Transverse colon (tissue), 4 donors: ENCODE measurements at regions of chr4 and their contacts with region 1.

Region 1: GRCh38 chr4:142846729-142847596 is 862 bp upstream of the INPP4B start:
- DNase-seq: peak; percentile 71
- H3K4me3 ChIP-seq: peak overlapping the region; percentile 7 to 61 (median 56)
- H3K27ac ChIP-seq: peak overlapping the region; percentile 53 to 67 (median 56)
- H3K4me1 ChIP-seq: peaks cover 3 to 18% (median 16%) of the 10 kb centered on the region in 4 donors
- H3K27me3 ChIP-seq: peaks cover 10% of the 10 kb centered on the region
- CTCF ChIP-seq: peak; percentile 18 to 55 (median 51)
- EP300 ChIP-seq: no peak
- POLR2A ChIP-seq: no peak

Region 2: GRCh38 chr4:142347241-142347640 is 499.7 kb before region 1 on chr4:
- in situ Hi-C with region 1: loop called in 2 of 4 experiments (anchors 10 to 25 kb)
- intact Hi-C with region 1: no loop called
- DNase-seq: no peak
- H3K4me3 ChIP-seq: no peak overlapping the region
- H3K27ac ChIP-seq: no peak overlapping the region
- H3K4me1 ChIP-seq: peaks cover 0 to 40% (median 17%) of the 10 kb centered on the region in 4 donors
- H3K27me3 ChIP-seq: no peaks in the 10 kb centered on the region
- CTCF ChIP-seq: no peak
- EP300 ChIP-seq: no peak
- POLR2A ChIP-seq: no peak